Psoas muscle (tissue), 8 donors: ENCODE measurements at regions of chr17 and their contacts with region 1.

Region 1: DNA sequence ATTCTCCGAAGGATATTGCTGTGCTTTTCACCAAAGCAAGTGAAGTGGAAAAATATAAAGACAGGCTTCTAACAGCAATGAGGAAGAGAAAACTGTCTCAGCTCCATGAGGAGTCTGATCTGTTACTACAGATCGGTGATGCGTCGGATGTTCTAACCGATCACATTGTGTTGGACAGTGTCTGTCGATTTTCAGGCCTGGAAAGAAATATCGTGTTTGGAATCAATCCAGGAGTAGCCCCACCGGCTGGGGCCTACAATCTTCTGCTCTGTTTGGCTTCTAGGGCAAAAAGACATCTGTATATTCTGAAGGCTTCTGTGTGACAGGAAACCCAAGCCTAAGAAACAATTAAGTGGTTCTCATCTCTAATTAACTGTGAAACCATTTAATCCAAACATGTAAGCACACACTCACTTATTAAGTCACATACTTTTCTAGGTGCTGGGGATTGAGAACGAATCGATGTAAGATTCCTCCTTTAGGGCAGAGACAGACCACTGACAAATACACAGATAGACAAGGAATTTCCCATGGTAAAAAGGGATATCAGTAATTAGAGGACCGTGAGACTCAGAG is 22.8 kb downstream of the SLFN5 start:
- DNase-seq: no peak
- ATAC-seq: no peak
- H3K4me3 ChIP-seq: no peak overlapping the region
- H3K27ac ChIP-seq: no peak overlapping the region
- H3K4me1 ChIP-seq: no peaks in the 10 kb centered on the region
- H3K27me3 ChIP-seq: no peaks in the 10 kb centered on the region
- CTCF ChIP-seq: no peak

Region 2: DNA sequence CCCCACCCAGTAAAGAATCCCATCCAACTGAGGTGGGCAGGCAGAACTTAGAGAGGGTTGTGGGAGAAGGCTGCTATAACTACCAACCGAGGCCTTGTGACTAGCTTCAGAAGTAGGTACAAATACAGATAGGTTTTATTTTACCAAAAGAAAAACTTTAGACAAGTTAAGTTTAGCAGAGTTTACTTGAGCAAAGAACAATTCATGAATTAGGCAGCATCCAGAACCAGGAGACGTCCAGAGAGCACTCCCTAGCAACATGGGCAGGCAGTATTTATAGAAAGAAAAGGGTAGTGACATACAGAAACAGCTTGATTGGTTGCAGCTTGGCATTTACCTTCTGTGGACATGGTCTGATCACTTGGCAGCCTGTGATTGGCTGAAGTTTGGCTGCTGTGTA is 19.3 kb after region 1 on chr17:
- intact Hi-C with region 1: loop called in 1 of 2 experiments (anchors 2 kb)
- DNase-seq: no peak
- ATAC-seq: no peak
- H3K4me3 ChIP-seq: no peak overlapping the region
- H3K27ac ChIP-seq: no peak overlapping the region
- H3K4me1 ChIP-seq: no peaks in the 10 kb centered on the region
- H3K27me3 ChIP-seq: peaks cover 0 to 2% (median 0%) of the 10 kb centered on the region in 3 donors
- CTCF ChIP-seq: no peak